Activated T-helper 1 cell treated with anti-CD3 and anti-CD28 coated beads, Interleukin-12 subunit alpha, Interleukin-12 subunit beta, Interleukin-2, Interleukin-4 antibody, amounts not matched to agents 30 ng/mL and 10 ng/mL and 1 ng/mL, durations not matched to agents 14 hours and 24 hours and 36 hours (primary cell): ENCODE measurements at regions of chr18 and their contacts with region 1.

Region 1: GRCh38 chr18:50878345-50879301 is at the start of gene ME2:
- DNase-seq: peak; percentile 87
- H3K4me3 Mint-ChIP-seq: peak within 1 kb of the TSS; percentile 99
- H3K27ac Mint-ChIP-seq: peak within 1 kb of the TSS; percentile 99
- H3K4me1 Mint-ChIP-seq: peaks cover 16% of the 10 kb centered on the region
- H3K27me3 Mint-ChIP-seq: no peaks in the 10 kb centered on the region
- total RNA-seq, gene ME2: 122 and 129 TPM in 2 replicates

Region 2: GRCh38 chr18:50281295-50281971 is 597.2 kb before region 1 on chr18 and contains the start of gene MBD1:
- intact Hi-C with region 1: loop called (anchors 5 kb)
- DNase-seq: peak; percentile 94
- H3K4me3 Mint-ChIP-seq: peak within 1 kb of the TSS; percentile 91
- H3K27ac Mint-ChIP-seq: peak within 1 kb of the TSS; percentile 87
- H3K4me1 Mint-ChIP-seq: peaks cover 40% of the 10 kb centered on the region
- H3K27me3 Mint-ChIP-seq: no peaks in the 10 kb centered on the region
- total RNA-seq, gene MBD1: 94.8 and 95.2 TPM in 2 replicates

Region 3: DNA sequence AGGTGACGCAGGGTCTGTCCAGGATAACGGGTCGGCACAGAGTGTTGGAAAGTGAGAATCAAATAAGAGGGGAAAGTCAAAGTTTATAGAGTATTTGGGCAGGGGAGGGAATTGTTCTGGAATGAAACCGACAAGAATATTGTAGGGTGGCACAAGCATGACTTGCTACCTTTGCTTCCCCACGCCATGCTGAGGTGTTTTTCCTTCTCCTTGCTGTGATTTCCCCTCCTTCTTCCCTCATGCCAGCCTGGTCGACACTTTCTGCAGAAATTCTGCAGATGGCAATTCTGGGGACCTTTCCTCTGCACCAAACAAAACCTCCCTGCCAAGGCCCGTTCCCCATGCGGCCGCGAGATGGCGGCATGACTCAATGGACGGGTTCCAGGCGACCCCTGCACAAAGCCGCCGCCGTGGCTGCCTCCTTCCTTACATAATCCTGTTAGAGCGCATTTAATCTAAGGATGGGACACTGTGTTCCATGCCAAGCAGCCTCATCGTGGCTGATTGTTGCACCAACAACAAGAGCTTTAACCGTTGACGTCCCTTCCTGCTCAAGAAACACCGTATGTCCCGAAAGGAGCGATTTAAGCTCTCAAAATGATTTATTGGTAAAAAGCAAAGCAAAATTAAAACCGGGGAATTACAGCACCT is 58.8 kb before region 1 on chr18 and contains the start of gene MRO:
- intact Hi-C with region 1: loop called (anchors 2 kb)
- DNase-seq: peak; percentile 67
- H3K4me3 Mint-ChIP-seq: no peak within 1 kb of the TSS
- H3K27ac Mint-ChIP-seq: no peak within 1 kb of the TSS
- H3K4me1 Mint-ChIP-seq: no peaks in the 10 kb centered on the region
- H3K27me3 Mint-ChIP-seq: peaks cover 6% of the 10 kb centered on the region
- total RNA-seq, gene MRO: not detected in 2 replicates

Region 4: GRCh38 chr18:50967714-50968661 is 89.4 kb after region 1 on chr18 and contains the start of gene ELAC1:
- intact Hi-C with region 1: loop called (anchors 1 kb)
- DNase-seq: peak; percentile 60
- H3K4me3 Mint-ChIP-seq: peak within 1 kb of the TSS; percentile 96
- H3K27ac Mint-ChIP-seq: peak within 1 kb of the TSS; percentile 94
- H3K4me1 Mint-ChIP-seq: peaks cover 22% of the 10 kb centered on the region
- H3K27me3 Mint-ChIP-seq: peaks cover 2% of the 10 kb centered on the region
- total RNA-seq, gene ELAC1: 6.7 and 7.7 TPM in 2 replicates

Region 5: DNA sequence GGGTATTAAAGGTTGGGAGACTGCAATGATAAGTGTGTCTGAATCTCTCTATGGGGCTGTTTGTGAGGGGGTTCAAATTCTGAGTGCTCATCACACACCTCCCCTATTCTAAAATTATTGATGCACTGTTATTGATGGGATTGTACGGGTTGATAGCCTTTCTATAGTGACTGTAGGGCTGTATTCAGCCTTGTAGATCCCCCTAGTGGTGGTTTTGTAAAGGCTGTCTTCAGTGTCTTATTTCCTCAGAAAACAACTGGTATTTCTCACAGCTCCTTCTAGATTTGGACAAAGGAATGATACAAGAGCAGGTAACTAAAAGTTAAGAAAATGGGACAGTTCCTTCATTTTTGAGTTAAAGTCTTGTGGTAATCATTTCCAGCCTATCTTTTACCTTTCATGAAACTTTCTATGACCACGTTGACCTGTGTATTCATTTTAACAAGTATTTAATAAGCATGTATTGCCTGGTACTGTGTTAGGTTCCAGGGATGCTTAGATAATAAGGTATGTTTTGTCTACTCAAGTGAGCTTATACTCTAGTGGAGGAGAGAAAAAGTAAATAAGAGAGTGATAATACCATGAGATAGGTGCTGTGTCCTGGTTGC is 172.6 kb after region 1 on chr18:
- intact Hi-C with region 1: loop called (anchors 1 kb)
- DNase-seq: no peak
- H3K4me3 Mint-ChIP-seq: no peak overlapping the region
- H3K27ac Mint-ChIP-seq: peak overlapping the region; percentile 16
- H3K4me1 Mint-ChIP-seq: peaks cover 39% of the 10 kb centered on the region
- H3K27me3 Mint-ChIP-seq: no peaks in the 10 kb centered on the region

Region 6: GRCh38 chr18:51171223-51171622 is 292.6 kb after region 1 on chr18:
- intact Hi-C with region 1: loop called (anchors 5 kb)
- DNase-seq: no peak
- H3K4me3 Mint-ChIP-seq: peak overlapping the region; percentile 58
- H3K27ac Mint-ChIP-seq: peak overlapping the region; percentile 98
- H3K4me1 Mint-ChIP-seq: peaks cover 62% of the 10 kb centered on the region
- H3K27me3 Mint-ChIP-seq: no peaks in the 10 kb centered on the region